ENCODE measurements at regions of chr1 and their contacts with region 1.

Region 1: GRCh38 chr1:92960395-92961130 is 699 bp downstream of the DIPK1A start:
- DNase-seq: peak; percentile 79
- H3K4me3 ChIP-seq: peak overlapping the region; percentile 82 to 83
- H3K27ac ChIP-seq: peak overlapping the region; percentile 66 to 84
- H3K4me1 ChIP-seq: peaks cover 8% of the 10 kb centered on the region in 2 experiments; a peak in 3 of 4 replicates
- H3K27me3 ChIP-seq: no peaks in the 10 kb centered on the region
- CTCF ChIP-seq: peak; percentile 72
- EP300 ChIP-seq: no peak
- RAD21 ChIP-seq: peak; percentile 88

Region 2: GRCh38 chr1:92851729-92852128 is 108.8 kb before region 1 on chr1:
- CTCF ChIA-PET with region 1: interaction called, 163 read pairs
- POLR2A ChIA-PET with region 1: no interaction called
- DNase-seq: peak; percentile 46
- H3K4me3 ChIP-seq: no peak overlapping the region
- H3K27ac ChIP-seq: peak overlapping the region in 1 of 2 experiments; percentile 18; a peak in 1 of 4 replicates
- H3K4me1 ChIP-seq: peaks cover 0 to 12% of the 10 kb centered on the region in 2 experiments; a peak in 1 of 4 replicates
- H3K27me3 ChIP-seq: no peaks in the 10 kb centered on the region
- CTCF ChIP-seq: no peak
- EP300 ChIP-seq: peak in 1 of 2 experiments; percentile 55; a peak in 1 of 4 replicates
- RAD21 ChIP-seq: no peak

Region 3: GRCh38 chr1:92872719-92873118 is 87.8 kb before region 1 on chr1:
- CTCF ChIA-PET with region 1: interaction called, 20 read pairs
- POLR2A ChIA-PET with region 1: no interaction called
- DNase-seq: no peak
- H3K4me3 ChIP-seq: no peak overlapping the region
- H3K27ac ChIP-seq: no peak overlapping the region
- H3K4me1 ChIP-seq: peaks cover 0 to 8% of the 10 kb centered on the region in 2 experiments; a peak in 1 of 4 replicates
- H3K27me3 ChIP-seq: no peaks in the 10 kb centered on the region
- CTCF ChIP-seq: no peak
- EP300 ChIP-seq: no peak
- RAD21 ChIP-seq: no peak

Region 4: GRCh38 chr1:92934395-92935378 is 25.9 kb before region 1 on chr1:
- CTCF ChIA-PET with region 1: interaction called, 21 read pairs
- POLR2A ChIA-PET with region 1: interaction called, 3 read pairs
- DNase-seq: peak; percentile 46
- H3K4me3 ChIP-seq: no peak overlapping the region
- H3K27ac ChIP-seq: peak overlapping the region; percentile 65 to 85
- H3K4me1 ChIP-seq: peaks cover 18 to 31% of the 10 kb centered on the region in 2 experiments; a peak in 3 of 4 replicates
- H3K27me3 ChIP-seq: no peaks in the 10 kb centered on the region
- CTCF ChIP-seq: no peak
- EP300 ChIP-seq: peak; percentile 90 to 97
- RAD21 ChIP-seq: peak; percentile 16; the same call in 1 of the 2 replicates

Region 5: DNA sequence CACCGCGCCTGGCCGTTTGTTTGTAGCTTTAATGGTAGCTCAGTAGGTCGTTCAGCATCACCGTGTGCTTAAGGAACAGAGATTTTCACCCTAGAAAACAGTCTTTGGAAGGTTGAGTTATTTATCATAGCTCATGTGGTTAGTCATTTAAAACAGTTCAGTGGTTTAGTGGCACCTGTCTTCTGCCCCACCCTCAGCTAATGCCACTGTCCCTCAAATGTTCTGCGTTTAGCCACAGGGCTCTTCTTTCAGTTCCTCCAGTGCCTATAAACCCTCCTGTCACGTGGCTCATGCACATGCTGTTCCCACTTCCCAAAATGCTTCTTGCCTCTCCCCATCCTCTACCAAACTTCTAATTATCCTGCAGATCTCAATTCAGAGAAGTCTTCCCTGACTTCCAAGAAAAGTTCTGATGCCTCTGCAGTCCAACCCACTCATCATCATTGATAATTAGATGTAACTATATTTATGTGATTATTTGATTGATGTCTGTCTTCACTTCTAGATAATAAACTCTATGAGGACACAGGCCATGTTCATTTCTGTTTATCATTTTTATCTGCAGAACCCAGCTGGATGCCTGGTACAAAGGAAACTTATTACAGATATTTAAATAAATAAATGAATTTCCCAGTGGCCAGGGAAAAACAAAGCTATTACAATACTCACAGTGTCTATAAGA is 15.1 kb after region 1 on chr1:
- CTCF ChIA-PET with region 1: interaction called, 14 read pairs
- POLR2A ChIA-PET with region 1: no interaction called
- DNase-seq: no peak
- H3K4me3 ChIP-seq: no peak overlapping the region
- H3K27ac ChIP-seq: no peak overlapping the region
- H3K4me1 ChIP-seq: no peaks in the 10 kb centered on the region
- H3K27me3 ChIP-seq: no peaks in the 10 kb centered on the region; the same call in 1 of the 2 replicates
- CTCF ChIP-seq: no peak
- EP300 ChIP-seq: no peak
- RAD21 ChIP-seq: no peak

Region 6: DNA sequence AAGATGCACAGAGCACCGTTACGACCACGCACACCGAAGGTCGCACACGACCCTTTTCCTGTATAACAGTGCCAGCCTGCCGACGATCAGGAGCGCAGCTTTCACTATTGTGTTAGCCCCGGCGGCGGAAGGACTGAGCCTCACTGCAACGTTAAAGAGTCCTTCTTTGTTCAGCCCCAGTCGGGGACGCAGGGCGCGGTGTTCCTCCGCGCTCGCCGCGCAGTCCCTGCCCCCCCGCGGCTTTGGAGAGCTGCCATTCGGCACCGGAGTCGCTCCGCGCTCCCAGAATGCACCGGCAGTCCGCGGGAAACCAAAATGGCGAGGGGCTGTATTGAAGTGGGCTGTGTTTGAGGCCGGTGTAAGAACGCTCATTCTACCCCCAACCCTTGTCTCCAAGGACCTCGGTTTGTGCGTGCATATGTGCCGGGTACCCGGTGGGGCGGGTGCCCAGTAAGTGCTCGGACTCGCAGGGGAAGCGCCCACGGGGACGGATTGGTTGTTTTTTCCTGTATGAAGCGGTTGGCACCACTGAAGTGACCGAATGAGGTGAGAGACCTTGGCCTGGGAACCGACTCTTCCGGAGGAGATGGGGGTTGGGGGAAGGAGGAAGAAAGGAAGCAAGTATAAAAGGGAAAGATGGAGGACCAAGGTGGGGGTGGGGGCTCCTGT is 118.6 kb after region 1 on chr1 and contains the start of gene MTF2:
- CTCF ChIA-PET with region 1: no interaction called
- POLR2A ChIA-PET with region 1: interaction called, 13 read pairs
- DNase-seq: peak; percentile 90
- H3K4me3 ChIP-seq: peak within 1 kb of the TSS; percentile 86 to 87
- H3K27ac ChIP-seq: peak within 1 kb of the TSS; percentile 78 to 96
- H3K4me1 ChIP-seq: peaks cover 0 to 6% of the 10 kb centered on the region in 2 experiments; a peak in 2 of 4 replicates
- H3K27me3 ChIP-seq: no peaks in the 10 kb centered on the region
- CTCF ChIP-seq: no peak
- EP300 ChIP-seq: peak; percentile 74 to 78; a peak in 3 of 4 replicates
- RAD21 ChIP-seq: peak; percentile 18; the same call in 1 of the 2 replicates
- polyA plus RNA-seq, gene MTF2: 11.9 and 15.3 TPM in 2 replicates